Caco-2 (cell line): ENCODE measurements at regions of chr3 and their contacts with region 1.

Region 1: DNA sequence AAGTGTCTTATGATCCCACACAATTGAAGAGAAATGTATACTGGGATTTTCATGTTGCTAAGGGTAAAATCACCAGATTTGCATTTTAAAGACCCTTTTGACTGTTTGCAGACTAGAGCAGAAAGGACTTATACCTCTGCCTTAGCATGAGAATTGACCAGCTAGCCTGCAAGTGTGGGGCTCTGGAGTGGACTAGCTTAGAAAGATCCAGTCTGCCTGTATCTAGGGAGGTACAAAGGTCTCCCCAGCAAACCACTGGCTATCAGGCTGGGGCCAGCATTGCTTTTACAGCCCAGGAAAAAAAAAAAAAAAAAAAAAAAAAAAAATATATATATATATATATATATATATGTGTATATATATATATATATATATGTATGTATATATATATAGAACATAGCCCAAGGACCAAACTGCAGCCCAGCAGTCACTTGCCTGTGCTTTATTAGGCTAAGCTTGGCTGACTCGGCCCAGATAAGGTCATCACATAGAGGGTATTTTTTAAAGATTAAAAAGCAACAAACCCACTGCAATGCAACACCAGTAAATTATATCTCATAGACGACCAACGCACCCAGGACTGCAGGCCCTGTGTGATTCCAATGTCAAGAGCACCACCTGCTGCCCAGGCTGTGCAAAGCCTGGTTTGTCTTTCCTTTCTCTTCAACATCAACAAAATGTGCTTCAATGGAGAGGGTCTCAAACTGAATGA is 63.7 kb downstream of the DCLK3 start:
- DNase-seq: peak; percentile 68 to 70
- H3K4me3 ChIP-seq: no peak overlapping the region
- H3K4me3 Mint-ChIP-seq: no peak overlapping the region
- H3K27ac Mint-ChIP-seq: no peak overlapping the region
- H3K4me1 ChIP-seq: no peaks in the 10 kb centered on the region
- H3K4me1 Mint-ChIP-seq: no peaks in the 10 kb centered on the region
- H3K27me3 ChIP-seq: no peaks in the 10 kb centered on the region
- H3K27me3 Mint-ChIP-seq: no peaks in the 10 kb centered on the region
- CTCF ChIP-seq: peak; percentile 83 to 89

Region 2: DNA sequence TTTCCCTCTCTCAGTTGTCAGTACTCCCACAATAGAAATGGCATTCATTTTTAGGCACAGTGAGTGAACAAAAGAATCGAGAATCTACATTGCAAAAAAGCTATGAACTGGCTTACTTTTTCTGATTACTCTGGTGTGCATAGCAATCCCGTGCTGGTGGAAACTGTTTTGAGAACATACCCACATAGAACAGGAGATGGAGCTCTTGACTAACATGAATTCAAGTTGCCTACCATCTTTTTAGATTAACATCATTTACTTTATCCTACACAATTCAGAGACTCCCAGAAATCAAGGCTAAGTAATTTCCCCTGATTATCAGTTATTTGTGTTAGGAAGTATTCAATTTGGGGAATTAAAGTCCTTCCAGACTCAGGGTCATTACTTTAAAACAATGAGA is 734.8 kb before region 1 on chr3:
- CTCF ChIA-PET with region 1: no interaction called
- POLR2A ChIA-PET with region 1: no interaction called
- intact Hi-C with region 1: loop called (anchors 1 kb)
- DNase-seq: peak in 1 of 2 experiments; percentile 13
- H3K4me3 ChIP-seq: no peak overlapping the region
- H3K4me3 Mint-ChIP-seq: no peak overlapping the region
- H3K27ac Mint-ChIP-seq: no peak overlapping the region
- H3K4me1 ChIP-seq: no peaks in the 10 kb centered on the region
- H3K4me1 Mint-ChIP-seq: no peaks in the 10 kb centered on the region
- H3K27me3 ChIP-seq: no peaks in the 10 kb centered on the region
- H3K27me3 Mint-ChIP-seq: peaks cover 2% of the 10 kb centered on the region
- CTCF ChIP-seq: peak; percentile 20 to 44

Region 3: GRCh38 chr3:36124118-36124796 is 576.4 kb before region 1 on chr3:
- CTCF ChIA-PET with region 1: no interaction called
- POLR2A ChIA-PET with region 1: no interaction called
- intact Hi-C with region 1: loop called (anchors 1 kb)
- DNase-seq: peak; percentile 51 to 64
- H3K4me3 ChIP-seq: no peak overlapping the region
- H3K4me3 Mint-ChIP-seq: no peak overlapping the region
- H3K27ac Mint-ChIP-seq: no peak overlapping the region
- H3K4me1 ChIP-seq: no peaks in the 10 kb centered on the region
- H3K4me1 Mint-ChIP-seq: no peaks in the 10 kb centered on the region
- H3K27me3 ChIP-seq: no peaks in the 10 kb centered on the region
- H3K27me3 Mint-ChIP-seq: peaks cover 2% of the 10 kb centered on the region
- CTCF ChIP-seq: peak; percentile 55 to 75

Region 4: DNA sequence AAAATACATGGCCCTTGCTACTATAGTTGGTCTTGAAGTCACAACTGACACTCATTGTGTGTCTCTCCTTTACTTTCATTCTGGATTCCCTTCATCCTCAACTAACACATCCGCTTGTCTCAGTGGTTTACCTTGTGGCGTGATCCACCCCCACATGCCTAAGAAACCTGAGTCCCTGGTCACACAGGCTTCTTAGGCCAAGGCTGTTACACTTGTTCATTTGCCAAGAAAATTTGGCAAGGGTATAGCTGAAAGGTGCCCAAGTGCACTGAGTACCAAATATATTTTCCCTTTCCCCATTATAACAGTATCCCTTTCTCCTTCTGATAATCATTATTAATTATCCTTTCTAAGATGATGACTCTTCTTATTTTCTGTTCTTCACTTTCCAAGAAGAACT is 528.0 kb before region 1 on chr3:
- CTCF ChIA-PET with region 1: no interaction called
- POLR2A ChIA-PET with region 1: no interaction called
- intact Hi-C with region 1: no loop called
- DNase-seq: no peak
- H3K4me3 ChIP-seq: no peak overlapping the region
- H3K4me3 Mint-ChIP-seq: no peak overlapping the region
- H3K27ac Mint-ChIP-seq: no peak overlapping the region
- H3K4me1 ChIP-seq: no peaks in the 10 kb centered on the region
- H3K4me1 Mint-ChIP-seq: no peaks in the 10 kb centered on the region
- H3K27me3 ChIP-seq: no peaks in the 10 kb centered on the region
- H3K27me3 Mint-ChIP-seq: peaks cover 5% of the 10 kb centered on the region
- CTCF ChIP-seq: no peak

Region 5: DNA sequence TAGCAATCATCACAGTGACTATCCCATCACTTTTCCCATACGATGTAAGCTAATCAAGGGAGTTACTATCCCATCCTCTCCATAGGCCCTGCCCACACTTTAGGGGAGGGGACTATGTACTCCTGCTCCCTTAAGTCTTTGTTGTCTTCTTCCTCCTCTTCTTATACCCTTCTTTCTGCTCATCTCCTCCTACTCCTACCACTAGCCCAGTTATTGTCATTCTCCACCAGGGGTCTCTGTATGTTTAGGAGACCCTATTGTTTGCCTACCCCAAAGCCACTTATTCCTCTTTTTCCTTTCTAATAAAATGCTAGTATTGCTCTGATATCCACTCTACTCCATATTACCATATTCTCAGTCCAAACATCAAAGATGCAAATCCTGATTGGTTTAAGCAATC is 292.5 kb before region 1 on chr3:
- CTCF ChIA-PET with region 1: no interaction called
- POLR2A ChIA-PET with region 1: no interaction called
- intact Hi-C with region 1: loop called (anchors 1 kb)
- DNase-seq: peak in 1 of 2 experiments; percentile 3
- H3K4me3 ChIP-seq: no peak overlapping the region
- H3K4me3 Mint-ChIP-seq: no peak overlapping the region
- H3K27ac Mint-ChIP-seq: no peak overlapping the region
- H3K4me1 ChIP-seq: no peaks in the 10 kb centered on the region
- H3K4me1 Mint-ChIP-seq: no peaks in the 10 kb centered on the region
- H3K27me3 ChIP-seq: no peaks in the 10 kb centered on the region
- H3K27me3 Mint-ChIP-seq: peaks cover 15% of the 10 kb centered on the region
- CTCF ChIP-seq: peak in 1 of 2 experiments; percentile 17

Region 6: DNA sequence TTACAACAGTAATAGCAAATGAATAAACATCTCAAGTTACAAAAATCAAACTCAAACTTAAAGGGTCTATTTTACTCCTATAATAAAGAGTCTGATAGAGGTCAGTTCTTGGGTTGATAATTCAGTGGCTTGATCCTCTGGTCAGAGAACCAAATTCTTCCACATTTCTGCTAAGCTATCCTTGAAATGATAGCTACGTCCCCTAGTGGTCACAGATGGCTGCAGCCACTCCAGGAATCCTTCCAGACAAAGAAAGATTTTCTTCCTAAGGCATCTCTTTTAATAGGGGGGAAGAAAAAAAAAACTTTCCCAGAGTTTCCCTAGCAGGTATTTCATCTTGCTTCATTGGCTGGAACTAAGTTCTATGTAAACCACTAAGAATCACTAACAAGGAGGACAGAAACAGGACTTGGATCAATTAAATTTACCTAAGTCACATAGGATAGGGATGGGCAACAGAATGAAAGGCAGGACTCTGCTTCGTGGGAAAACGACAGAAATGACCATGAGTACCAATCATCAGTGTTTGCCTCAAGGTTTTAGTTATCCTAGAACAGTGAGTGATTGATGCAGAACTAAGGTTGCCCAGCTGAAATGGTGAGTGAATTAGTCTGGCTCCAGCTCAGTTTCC is 159.7 kb before region 1 on chr3:
- CTCF ChIA-PET with region 1: interaction called, 4 read pairs
- POLR2A ChIA-PET with region 1: no interaction called
- intact Hi-C with region 1: loop called (anchors 2 kb)
- DNase-seq: peak in 1 of 2 experiments; percentile 20
- H3K4me3 ChIP-seq: no peak overlapping the region
- H3K4me3 Mint-ChIP-seq: no peak overlapping the region
- H3K27ac Mint-ChIP-seq: no peak overlapping the region
- H3K4me1 ChIP-seq: no peaks in the 10 kb centered on the region
- H3K4me1 Mint-ChIP-seq: no peaks in the 10 kb centered on the region
- H3K27me3 ChIP-seq: no peaks in the 10 kb centered on the region; the same call in 1 of the 2 replicates
- H3K27me3 Mint-ChIP-seq: peaks cover 14% of the 10 kb centered on the region
- CTCF ChIP-seq: peak; percentile 56 to 85

Region 7: GRCh38 chr3:36591959-36592358 is 108.7 kb before region 1 on chr3:
- CTCF ChIA-PET with region 1: no interaction called
- POLR2A ChIA-PET with region 1: no interaction called
- intact Hi-C with region 1: loop called (anchors 1 kb)
- DNase-seq: no peak
- H3K4me3 ChIP-seq: no peak overlapping the region
- H3K4me3 Mint-ChIP-seq: no peak overlapping the region
- H3K27ac Mint-ChIP-seq: no peak overlapping the region
- H3K4me1 ChIP-seq: no peaks in the 10 kb centered on the region
- H3K4me1 Mint-ChIP-seq: no peaks in the 10 kb centered on the region
- H3K27me3 ChIP-seq: no peaks in the 10 kb centered on the region
- H3K27me3 Mint-ChIP-seq: no peaks in the 10 kb centered on the region
- CTCF ChIP-seq: no peak

Region 8: GRCh38 chr3:36600413-36600812 is 100.3 kb before region 1 on chr3:
- CTCF ChIA-PET with region 1: no interaction called
- POLR2A ChIA-PET with region 1: no interaction called
- intact Hi-C with region 1: loop called (anchors 2 kb)
- DNase-seq: no peak
- H3K4me3 ChIP-seq: no peak overlapping the region
- H3K4me3 Mint-ChIP-seq: no peak overlapping the region
- H3K27ac Mint-ChIP-seq: no peak overlapping the region
- H3K4me1 ChIP-seq: no peaks in the 10 kb centered on the region
- H3K4me1 Mint-ChIP-seq: no peaks in the 10 kb centered on the region
- H3K27me3 ChIP-seq: no peaks in the 10 kb centered on the region
- H3K27me3 Mint-ChIP-seq: peaks cover 15% of the 10 kb centered on the region
- CTCF ChIP-seq: no peak